ENCODE measurements at regions of chr11 and their contacts with region 1.

Region 1: DNA sequence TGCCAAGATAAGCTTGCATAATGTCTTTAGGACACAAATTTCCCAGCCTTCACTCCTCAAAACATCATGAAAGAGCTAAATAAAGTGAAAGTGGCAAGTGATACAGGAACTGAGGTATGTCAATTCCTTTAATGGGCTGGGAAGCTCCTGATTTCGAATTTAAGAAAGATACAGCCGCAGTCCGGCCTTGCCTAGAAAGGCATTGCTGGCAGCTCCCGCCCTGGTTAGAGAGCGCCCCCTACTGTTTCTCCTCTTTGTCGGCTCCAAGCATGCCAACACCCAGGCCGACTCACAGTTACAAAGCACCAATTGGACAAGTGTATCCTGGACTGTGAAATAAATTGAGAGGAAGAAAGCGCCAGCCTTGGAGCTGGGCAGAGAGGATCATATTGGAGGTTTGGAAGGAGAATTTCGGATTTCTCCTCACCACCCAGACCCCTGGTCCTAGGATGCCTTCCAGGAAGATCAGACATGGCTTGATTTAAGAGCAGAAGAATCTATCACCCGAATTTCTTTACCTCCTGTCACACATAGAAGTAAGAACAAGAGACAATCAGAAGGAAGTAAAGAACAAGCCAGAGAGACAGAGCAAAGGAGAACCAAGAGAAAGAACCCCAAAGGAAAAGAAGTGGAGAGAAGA is 84.0 kb downstream of the FAM76B start:
- DNase-seq: peak; percentile 76
- H3K4me3 ChIP-seq: no peak overlapping the region
- H3K27ac ChIP-seq: no peak overlapping the region
- H3K4me1 ChIP-seq: peaks cover 6% of the 10 kb centered on the region
- CTCF ChIP-seq: peak; percentile 98

Region 2: DNA sequence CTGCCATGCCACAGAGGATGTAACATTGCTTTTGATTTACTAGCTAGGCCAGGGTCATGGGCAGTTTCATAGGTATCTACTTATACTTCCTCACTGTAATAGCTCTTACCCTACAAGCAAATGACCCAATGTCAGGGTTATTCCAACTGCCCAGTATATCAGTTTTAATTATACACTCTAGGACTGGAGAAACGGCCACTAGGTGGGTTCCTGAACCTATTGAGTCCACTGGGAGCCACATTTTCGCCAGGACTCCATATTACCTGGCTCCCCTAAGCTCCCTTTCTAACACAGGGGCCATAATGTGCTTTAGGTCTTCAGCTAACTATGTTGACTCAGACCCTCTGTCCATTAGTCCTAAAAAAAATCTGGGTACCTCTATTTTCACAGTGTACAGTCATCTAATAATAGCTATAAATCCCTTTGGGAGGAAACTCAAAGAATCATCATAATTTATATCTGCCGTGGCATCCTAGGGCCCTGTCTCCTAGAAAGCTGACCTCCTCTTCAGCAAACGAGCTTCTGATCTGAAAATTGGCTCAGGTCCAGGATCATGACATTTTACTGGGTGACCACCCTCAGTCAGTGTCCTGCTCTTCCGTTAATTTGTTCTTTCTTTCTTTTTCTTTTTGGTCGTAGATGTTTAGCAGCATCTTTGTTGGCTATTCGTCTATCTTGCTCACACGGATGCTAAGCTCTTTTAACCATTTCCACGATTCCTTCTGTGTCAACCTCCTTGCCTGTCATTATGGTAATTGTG is 160.3 kb before region 1 on chr11:
- CTCF ChIA-PET with region 1: no interaction called
- POLR2A ChIA-PET with region 1: interaction called, 3 read pairs
- intact Hi-C with region 1: loop called (anchors 10 kb)
- DNase-seq: peak; percentile 16
- H3K4me3 ChIP-seq: no peak overlapping the region
- H3K27ac ChIP-seq: no peak overlapping the region
- H3K4me1 ChIP-seq: no peaks in the 10 kb centered on the region
- CTCF ChIP-seq: peak; percentile 51

Region 3: GRCh38 chr11:95695181-95695580 is 10.4 kb before region 1 on chr11:
- CTCF ChIA-PET with region 1: no interaction called
- POLR2A ChIA-PET with region 1: interaction called, 11 read pairs
- intact Hi-C with region 1: no loop called
- DNase-seq: no peak
- H3K4me3 ChIP-seq: no peak overlapping the region
- H3K27ac ChIP-seq: no peak overlapping the region
- H3K4me1 ChIP-seq: peaks cover 9% of the 10 kb centered on the region
- CTCF ChIP-seq: no peak

Measured in OCI-LY7 (cell line).